Tibial artery (tissue), 4 donors: ENCODE measurements at regions of chr1 and their contacts with region 1.

Region 1: DNA sequence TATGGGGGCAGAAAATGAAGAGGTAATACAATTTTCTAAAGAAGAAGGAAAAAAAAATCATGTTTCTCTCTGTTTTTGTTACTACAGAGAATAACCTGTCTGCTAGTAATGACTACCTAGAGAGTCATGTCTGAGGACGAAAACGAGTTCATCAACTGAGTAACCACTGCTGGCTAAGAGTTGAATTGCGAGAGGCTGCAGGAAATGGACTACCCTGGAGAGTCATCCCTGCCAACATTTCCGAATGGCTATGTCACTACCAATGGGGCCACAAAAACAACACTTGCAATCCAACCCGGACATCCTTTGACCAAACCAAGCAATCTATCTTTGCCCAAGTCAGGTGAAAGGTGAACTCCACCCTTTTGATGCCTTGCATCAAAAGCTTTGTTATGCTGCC is 120.6 kb downstream of the FCRL5 start:
- DNase-seq: no peak
- H3K4me3 ChIP-seq: no peak overlapping the region
- H3K27ac ChIP-seq: no peak overlapping the region
- H3K4me1 ChIP-seq: no peaks in the 10 kb centered on the region
- H3K27me3 ChIP-seq: no peaks in the 10 kb centered on the region
- CTCF ChIP-seq: no peak

Region 2: GRCh38 chr1:157388057-157388456 is 43.7 kb before region 1 on chr1:
- intact Hi-C with region 1: loop called (anchors 2 kb)
- DNase-seq: no peak
- H3K4me3 ChIP-seq: no peak overlapping the region
- H3K27ac ChIP-seq: no peak overlapping the region
- H3K4me1 ChIP-seq: no peaks in the 10 kb centered on the region
- H3K27me3 ChIP-seq: peaks cover 0 to 2% of the 10 kb centered on the region in 2 donors
- CTCF ChIP-seq: no peak

Region 3: DNA sequence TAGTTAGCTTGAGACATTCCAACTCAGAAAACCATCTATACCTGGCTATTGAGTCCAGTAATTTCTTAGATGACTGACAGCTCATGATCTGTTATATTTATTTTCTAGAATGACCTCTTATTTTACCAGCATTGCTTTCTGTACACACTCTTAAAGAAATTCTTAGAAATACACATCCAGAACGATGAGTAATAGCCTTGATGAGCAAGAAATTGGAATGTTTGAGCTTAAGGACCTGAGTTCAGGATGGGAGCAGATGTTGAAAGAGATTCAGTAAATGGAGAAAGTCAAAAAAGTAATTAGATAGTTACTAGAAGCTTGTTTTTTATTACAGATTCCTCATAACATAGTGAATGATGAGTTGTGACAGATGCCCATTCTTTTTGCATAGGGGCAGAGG is 1511.3 kb after region 1 on chr1:
- intact Hi-C with region 1: no loop called
- DNase-seq: no peak
- H3K4me3 ChIP-seq: no peak overlapping the region
- H3K27ac ChIP-seq: no peak overlapping the region
- H3K4me1 ChIP-seq: no peaks in the 10 kb centered on the region
- H3K27me3 ChIP-seq: no peaks in the 10 kb centered on the region
- CTCF ChIP-seq: no peak